Esophagus squamous epithelium (tissue), 5 donors: ENCODE measurements at regions of chr22 and their contacts with region 1.

Region 1: GRCh38 chr22:20418211-20418788 is 19.3 kb downstream of the SCARF2 start:
- DNase-seq: no peak
- H3K4me3 ChIP-seq: peak overlapping the region in 3 of 4 donors; percentile 32 to 63 (median 40)
- H3K27ac ChIP-seq: peak overlapping the region in 3 of 4 donors; percentile 39 to 62 (median 47)
- H3K4me1 ChIP-seq: peaks cover 4 to 20% (median 11%) of the 10 kb centered on the region in 3 donors
- H3K27me3 ChIP-seq: peaks cover 0 to 11% (median 0%) of the 10 kb centered on the region in 4 donors
- CTCF ChIP-seq: peak; percentile 74 to 91 (median 78)
- POLR2A ChIP-seq: no peak

Region 2: DNA sequence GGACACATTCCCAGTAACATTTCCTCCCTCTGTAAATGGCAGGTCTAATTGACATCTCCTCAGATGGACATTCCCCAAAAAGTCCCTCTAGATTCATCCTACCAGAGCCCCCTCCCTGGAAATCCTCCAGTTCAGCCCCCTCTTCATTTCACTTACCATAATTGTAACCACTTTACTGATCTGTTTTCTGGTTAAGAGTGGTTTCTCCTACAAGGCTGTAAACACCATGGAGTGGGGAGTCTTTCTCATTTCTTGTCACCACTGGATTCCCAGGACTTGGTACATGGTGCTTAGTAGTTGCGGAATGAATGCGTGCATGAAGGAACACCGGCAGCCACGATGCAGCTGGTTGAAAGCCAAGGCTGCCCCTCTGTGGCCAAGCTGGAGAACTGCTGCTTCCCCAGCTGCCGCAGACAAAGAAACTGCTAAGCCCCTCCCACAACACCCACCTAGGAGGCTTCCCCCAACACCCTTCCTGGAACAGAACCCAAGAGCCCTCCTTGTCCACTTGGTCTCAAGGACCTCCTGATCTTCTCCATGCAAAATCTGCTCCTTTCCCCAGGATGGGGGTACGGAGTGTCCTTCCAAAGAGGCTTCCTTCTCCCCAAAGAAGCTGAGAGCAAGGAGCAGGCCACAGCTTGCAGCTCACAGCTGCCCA is 37.9 kb after region 1 on chr22:
- intact Hi-C with region 1: loop called (anchors 5 kb)
- DNase-seq: no peak
- H3K4me3 ChIP-seq: no peak overlapping the region
- H3K27ac ChIP-seq: no peak overlapping the region
- H3K4me1 ChIP-seq: peaks cover 0 to 9% (median 0%) of the 10 kb centered on the region in 3 donors
- H3K27me3 ChIP-seq: no peaks in the 10 kb centered on the region
- CTCF ChIP-seq: peak; percentile 80 to 93 (median 84)
- POLR2A ChIP-seq: no peak

Region 3: DNA sequence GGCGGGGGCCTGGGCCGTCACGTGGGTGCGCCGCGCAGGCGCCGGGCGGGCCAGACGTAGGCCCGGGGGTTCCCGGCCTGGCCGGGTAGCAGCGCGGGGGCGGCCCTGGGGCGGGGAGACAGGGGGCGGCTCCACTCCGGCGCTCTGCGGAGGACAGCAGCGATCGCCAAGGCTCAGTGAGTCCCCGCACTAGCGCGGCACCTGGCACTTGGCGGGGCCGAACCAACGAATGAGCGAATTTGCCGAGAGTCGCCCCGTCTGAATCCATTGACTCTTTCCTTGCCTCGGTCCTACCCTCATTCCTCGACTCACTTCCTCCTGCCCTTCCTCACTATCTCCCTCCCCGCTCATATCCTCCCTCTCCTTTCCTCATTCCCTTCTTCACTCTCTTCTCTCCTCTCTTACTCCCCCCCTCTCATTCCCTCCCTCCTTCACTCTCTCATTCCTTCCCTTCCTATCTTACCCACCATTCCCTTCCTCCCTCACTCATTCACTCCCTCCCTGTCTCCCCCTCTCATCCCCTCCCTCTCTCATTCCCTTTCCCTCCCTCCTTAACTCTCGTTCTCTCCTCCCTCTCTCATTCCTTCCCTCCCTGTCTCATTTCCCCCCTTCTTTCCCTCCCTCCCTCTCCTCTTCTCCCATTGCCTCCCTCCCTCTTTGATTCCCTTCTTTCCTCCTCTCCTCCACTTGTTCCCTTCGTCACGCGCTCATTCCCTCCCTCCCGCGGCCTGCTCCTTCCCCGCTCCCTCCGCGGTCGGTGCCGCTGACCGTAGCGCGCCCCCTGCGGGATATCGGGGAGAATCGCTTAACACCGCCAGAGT is 77.8 kb after region 1 on chr22:
- intact Hi-C with region 1: loop called (anchors 5 kb)
- DNase-seq: peak; percentile 18
- H3K4me3 ChIP-seq: peak overlapping the region; percentile 57 to 95 (median 72)
- H3K27ac ChIP-seq: peak overlapping the region; percentile 82 to 99 (median 93)
- H3K4me1 ChIP-seq: peaks cover 6 to 43% (median 19%) of the 10 kb centered on the region in 3 donors
- H3K27me3 ChIP-seq: no peaks in the 10 kb centered on the region
- CTCF ChIP-seq: peak; percentile 80 to 89 (median 86)
- POLR2A ChIP-seq: peak in 2 of 4 donors; percentile 51 to 75